ENCODE measurements at regions of chr5 and their contacts with region 1.

Region 1: GRCh38 chr5:80474929-80475328 is 13.0 kb upstream of the FAM151B start:
- DNase-seq: no peak
- ATAC-seq: no peak
- H3K4me3 ChIP-seq: no peak overlapping the region
- H3K27ac ChIP-seq: no peak overlapping the region
- H3K4me1 ChIP-seq: no peaks in the 10 kb centered on the region
- H3K27me3 ChIP-seq: no peaks in the 10 kb centered on the region
- CTCF ChIP-seq: no peak
- EP300 ChIP-seq: no peak
- POLR2A ChIP-seq: no peak
- RAD21 ChIP-seq: no peak

Region 2: DNA sequence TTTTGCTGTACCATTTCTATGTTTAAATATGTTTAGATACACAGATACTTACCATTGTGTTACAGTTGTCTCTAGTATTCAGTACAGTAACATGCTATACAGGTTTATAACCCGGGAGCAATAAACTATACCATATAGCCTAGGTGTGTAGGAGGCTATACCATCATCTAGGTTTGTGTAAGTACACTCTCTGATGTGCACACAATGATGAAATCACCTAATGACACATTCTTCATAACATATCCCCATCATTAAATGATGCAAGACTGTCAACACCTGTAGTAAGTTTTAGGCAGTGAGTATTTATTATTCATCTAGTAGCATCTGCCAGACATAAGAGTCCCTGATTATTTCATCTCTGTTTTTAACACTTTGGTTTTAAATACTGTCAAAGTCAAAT is 187.2 kb after region 1 on chr5:
- CTCF ChIA-PET with region 1: no interaction called
- POLR2A ChIA-PET with region 1: no interaction called
- in situ Hi-C with region 1: loop called (anchors 5 kb)
- intact Hi-C with region 1: no loop called
- DNase-seq: no peak
- ATAC-seq: no peak
- H3K4me3 ChIP-seq: no peak overlapping the region
- H3K27ac ChIP-seq: no peak overlapping the region
- H3K4me1 ChIP-seq: no peaks in the 10 kb centered on the region
- H3K27me3 ChIP-seq: no peaks in the 10 kb centered on the region
- CTCF ChIP-seq: no peak
- EP300 ChIP-seq: no peak
- POLR2A ChIP-seq: no peak
- RAD21 ChIP-seq: no peak

Measured in K562 (cell line).